CD14-positive monocyte (primary cell): ENCODE measurements at regions of chr15 and their contacts with region 1.

Region 1: GRCh38 chr15:60179786-60180391 is 175.8 kb downstream of the FOXB1 start:
- DNase-seq: peak; percentile 3 to 18 (median 16)
- H3K4me3 ChIP-seq: no peak overlapping the region
- H3K4me3 Mint-ChIP-seq: no peak overlapping the region
- H3K27ac ChIP-seq: no peak overlapping the region
- H3K27ac Mint-ChIP-seq: no peak overlapping the region
- H3K4me1 ChIP-seq: no peaks in the 10 kb centered on the region
- H3K4me1 Mint-ChIP-seq: no peaks in the 10 kb centered on the region
- H3K27me3 ChIP-seq: no peaks in the 10 kb centered on the region
- H3K27me3 Mint-ChIP-seq: peaks cover 0 to 4% (median 3%) of the 10 kb centered on the region in 3 donors
- CTCF ChIP-seq: peak; percentile 90

Region 2: DNA sequence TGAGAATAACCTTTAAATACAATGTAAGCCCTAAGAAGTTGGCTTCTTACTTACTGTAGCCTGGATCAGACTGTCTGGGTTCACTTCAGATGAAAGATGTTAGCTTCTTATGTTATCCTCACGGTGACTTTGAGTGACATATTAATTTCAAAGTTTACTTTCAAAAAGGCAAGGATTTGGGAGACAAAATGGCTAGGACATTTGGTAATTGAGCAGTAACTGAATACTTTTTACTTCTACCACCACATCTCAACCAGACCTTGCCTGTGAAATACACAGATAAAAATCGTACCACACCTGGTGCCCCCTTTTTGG is 454.8 kb before region 1 on chr15:
- intact Hi-C with region 1: loop called in 1 of 2 experiments (anchors 10 kb)
- DNase-seq: no peak
- H3K4me3 ChIP-seq: no peak overlapping the region
- H3K4me3 Mint-ChIP-seq: no peak overlapping the region
- H3K27ac ChIP-seq: no peak overlapping the region
- H3K27ac Mint-ChIP-seq: no peak overlapping the region
- H3K4me1 ChIP-seq: no peaks in the 10 kb centered on the region
- H3K4me1 Mint-ChIP-seq: no peaks in the 10 kb centered on the region
- H3K27me3 ChIP-seq: peaks cover 0 to 3% of the 10 kb centered on the region in 2 donors
- H3K27me3 Mint-ChIP-seq: peaks cover 2 to 3% (median 2%) of the 10 kb centered on the region in 3 donors
- CTCF ChIP-seq: peak; percentile 24